Ovary (tissue), 10 donors: ENCODE measurements at regions of chr12 and their contacts with region 1.

Region 1: GRCh38 chr12:31959161-31959700 is at the start of gene RESF1:
- DNase-seq: peak; percentile 84 to 91 (median 87)
- H3K4me3 ChIP-seq: peak within 1 kb of the TSS; percentile 82
- H3K27ac ChIP-seq: peak within 1 kb of the TSS; percentile 76 to 83
- H3K4me1 ChIP-seq: peaks cover 7% of the 10 kb centered on the region
- H3K27me3 ChIP-seq: no peaks in the 10 kb centered on the region
- CTCF ChIP-seq: peak in 1 of 3 donors; percentile 9
- EP300 ChIP-seq: no peak
- POLR2A ChIP-seq: peak; percentile 52
- total RNA-seq, gene RESF1: 145 to 304 (median 157) TPM

Region 2: GRCh38 chr12:31672521-31672920 is 286.7 kb before region 1 on chr12:
- intact Hi-C with region 1: loop called in 1 of 4 experiments (anchors 5 kb)
- DNase-seq: no peak
- H3K4me3 ChIP-seq: no peak overlapping the region
- H3K27ac ChIP-seq: no peak overlapping the region
- H3K4me1 ChIP-seq: no peaks in the 10 kb centered on the region
- H3K27me3 ChIP-seq: no peaks in the 10 kb centered on the region
- CTCF ChIP-seq: no peak
- EP300 ChIP-seq: no peak
- POLR2A ChIP-seq: no peak

Region 3: DNA sequence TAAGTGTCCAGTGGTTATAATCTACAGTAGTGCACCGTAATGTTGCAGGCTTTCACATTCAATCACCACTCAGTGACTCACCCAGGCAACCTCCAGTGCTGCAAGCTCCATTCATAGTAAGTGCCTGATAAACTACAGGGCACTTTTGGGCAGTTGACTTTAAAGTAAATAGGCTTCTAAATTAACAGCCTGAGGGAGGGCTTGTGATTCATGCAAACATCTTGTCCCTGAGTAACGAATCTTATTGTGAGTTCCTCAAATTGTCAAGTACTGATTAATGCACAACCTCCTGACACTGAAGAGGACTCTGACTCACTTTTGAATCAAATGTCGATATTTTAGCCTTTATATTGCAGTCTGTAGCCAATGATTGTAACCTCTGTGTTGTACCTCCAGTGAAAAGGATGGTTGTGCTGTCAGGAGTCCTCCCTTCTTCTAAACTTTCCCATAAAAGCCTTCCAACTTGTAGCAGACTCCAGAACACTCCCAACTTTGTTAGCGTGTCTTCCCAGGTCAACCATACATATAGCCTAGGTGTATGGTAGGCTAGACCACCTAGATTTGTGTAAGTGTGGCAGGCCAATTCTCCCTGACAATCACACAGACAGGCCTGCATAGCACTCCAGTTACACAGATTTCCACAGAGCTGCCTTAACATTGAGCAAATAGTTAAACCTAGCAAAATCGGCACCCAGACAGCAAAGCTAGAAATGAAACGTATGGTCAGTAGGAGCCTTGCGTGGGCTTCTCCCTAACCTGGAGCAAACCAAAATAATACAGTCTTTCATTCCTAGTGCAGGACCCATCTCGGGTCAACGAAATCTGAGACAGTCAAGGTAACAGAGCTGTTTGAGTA is 92.6 kb after region 1 on chr12:
- intact Hi-C with region 1: loop called in 1 of 4 experiments (anchors 5 kb)
- DNase-seq: peak in 2 of 5 donors; percentile 29 to 43
- H3K4me3 ChIP-seq: no peak overlapping the region
- H3K27ac ChIP-seq: peak overlapping the region in 1 of 2 donors; percentile 67
- H3K4me1 ChIP-seq: peaks cover 13% of the 10 kb centered on the region
- H3K27me3 ChIP-seq: no peaks in the 10 kb centered on the region
- CTCF ChIP-seq: no peak
- EP300 ChIP-seq: no peak
- POLR2A ChIP-seq: no peak